ENCODE measurements at regions of chr17 and their contacts with region 1.

Region 1: DNA sequence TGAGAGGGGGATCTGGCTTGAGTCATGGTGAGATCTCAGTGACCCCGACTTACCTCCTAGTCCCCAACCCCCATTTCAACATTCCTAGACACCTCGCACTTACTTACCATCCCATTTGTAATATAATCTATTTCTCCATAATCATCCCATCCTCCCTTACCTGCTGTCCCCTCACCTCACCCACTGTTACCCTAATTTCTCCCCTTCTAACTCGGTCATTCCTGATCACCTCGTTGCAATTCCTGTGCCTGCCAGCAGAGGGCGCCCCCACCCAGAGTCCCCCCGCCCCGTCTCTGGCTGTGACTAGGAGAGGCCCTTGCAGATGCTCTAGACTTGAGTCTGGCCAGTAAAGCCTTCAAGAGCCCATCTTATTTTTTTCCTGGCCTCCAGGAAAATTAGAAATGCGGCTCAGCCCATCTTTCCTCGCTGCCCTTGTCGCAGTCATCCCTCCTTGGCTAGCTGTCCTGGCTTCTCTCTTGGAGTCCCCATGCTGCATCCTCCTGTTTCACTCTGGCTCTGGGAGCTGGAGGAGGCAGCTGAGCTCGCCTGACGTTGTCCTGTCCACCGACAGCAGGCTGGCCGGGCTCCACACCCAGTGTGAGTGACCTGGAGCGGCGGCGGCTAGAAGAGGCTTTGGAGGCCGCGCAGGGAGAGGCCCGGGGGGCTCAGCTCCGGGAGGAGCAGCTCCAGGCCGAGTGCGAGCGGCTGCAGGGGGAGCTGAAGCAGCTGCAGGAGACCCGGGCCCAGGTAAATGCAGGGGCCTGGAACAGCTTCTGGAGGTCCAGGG is 5.0 kb downstream of the TBKBP1 start:
- DNase-seq: peak; percentile 34 to 82 (median 63)
- ATAC-seq: peak; percentile 70
- H3K4me3 ChIP-seq: no peak overlapping the region
- H3K4me3 Mint-ChIP-seq: peak overlapping the region in 1 of 10 donors; percentile 29
- H3K27ac ChIP-seq: no peak overlapping the region
- H3K27ac Mint-ChIP-seq: peak overlapping the region in 2 of 9 donors; percentile 38 to 78
- H3K4me1 ChIP-seq: peaks cover 17 to 43% of the 10 kb centered on the region in 2 donors
- H3K4me1 Mint-ChIP-seq: peaks cover 19 to 54% (median 27%) of the 10 kb centered on the region in 7 donors
- H3K27me3 ChIP-seq: no peaks in the 10 kb centered on the region
- H3K27me3 Mint-ChIP-seq: peaks cover 0 to 3% (median 0%) of the 10 kb centered on the region in 5 donors

Region 2: DNA sequence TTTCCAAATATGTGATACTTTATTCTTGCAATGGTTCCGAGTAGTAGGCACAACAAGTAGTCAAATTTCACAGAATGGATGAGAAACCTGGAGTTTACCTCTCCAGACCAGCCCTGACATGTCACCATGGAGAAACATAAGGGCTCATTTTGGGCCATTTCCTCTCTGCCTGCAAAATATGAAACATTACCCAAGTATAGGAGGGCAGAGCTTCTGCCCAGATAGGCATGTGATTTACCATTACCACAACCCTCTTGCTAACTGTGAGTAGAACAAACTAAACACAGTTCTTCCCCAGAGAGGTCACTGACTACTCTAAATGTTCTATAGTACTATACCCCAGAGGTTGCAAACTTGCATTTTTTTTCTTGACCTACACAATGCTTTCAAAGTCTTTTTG is 64.9 kb before region 1 on chr17:
- CTCF ChIA-PET with region 1: no interaction called
- POLR2A ChIA-PET with region 1: no interaction called
- intact Hi-C with region 1: no loop called
- DNase-seq: no peak
- ATAC-seq: no peak
- H3K4me3 ChIP-seq: no peak overlapping the region
- H3K4me3 Mint-ChIP-seq: no peak overlapping the region
- H3K27ac ChIP-seq: no peak overlapping the region
- H3K27ac Mint-ChIP-seq: no peak overlapping the region
- H3K4me1 ChIP-seq: no peaks in the 10 kb centered on the region
- H3K4me1 Mint-ChIP-seq: peaks cover 6 to 16% (median 8%) of the 10 kb centered on the region in 7 donors
- H3K27me3 ChIP-seq: no peaks in the 10 kb centered on the region
- H3K27me3 Mint-ChIP-seq: no peaks in the 10 kb centered on the region

Region 3: DNA sequence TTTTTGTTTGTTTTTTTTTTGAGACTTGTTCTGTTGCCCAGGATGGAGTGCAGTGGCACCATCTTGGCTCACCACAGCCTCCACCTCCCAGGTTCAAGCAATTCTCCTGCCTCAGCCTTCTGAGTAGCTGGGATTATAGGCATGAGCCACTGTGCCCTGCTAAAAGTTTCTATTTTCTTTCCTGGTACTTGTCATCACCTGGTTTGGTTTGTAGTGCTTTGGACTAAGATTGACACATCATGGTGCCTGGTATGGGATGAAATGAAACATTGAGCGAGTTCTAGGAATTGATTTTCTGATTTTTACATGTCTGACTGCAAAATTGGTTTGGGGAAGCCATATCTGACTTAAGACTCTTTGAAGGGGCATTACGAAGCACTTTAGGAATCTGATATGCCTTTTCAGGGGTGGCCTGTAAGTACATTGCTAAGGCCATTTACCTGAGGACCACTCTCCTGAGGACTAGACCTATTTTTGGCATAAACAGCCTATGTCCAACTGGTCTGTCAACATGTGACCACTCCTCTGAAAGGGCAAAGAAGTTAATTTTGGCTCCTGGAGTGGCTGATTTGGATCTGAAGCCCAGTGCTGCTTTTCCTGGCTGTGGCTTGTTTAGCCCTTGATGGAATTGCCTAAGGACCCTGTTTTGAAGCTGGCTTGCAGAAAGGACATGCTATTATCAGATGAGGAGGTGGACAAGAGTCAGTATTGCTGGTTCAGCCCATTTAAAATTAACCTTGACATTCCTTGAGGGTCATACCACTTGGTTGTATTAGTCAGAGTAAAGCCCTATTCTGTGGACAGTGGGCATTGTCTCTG is 23.4 kb before region 1 on chr17:
- CTCF ChIA-PET with region 1: interaction called, 11 read pairs
- POLR2A ChIA-PET with region 1: no interaction called
- intact Hi-C with region 1: no loop called
- DNase-seq: peak in 1 of 9 donors; percentile 9
- ATAC-seq: no peak
- H3K4me3 ChIP-seq: no peak overlapping the region
- H3K4me3 Mint-ChIP-seq: no peak overlapping the region
- H3K27ac ChIP-seq: no peak overlapping the region
- H3K27ac Mint-ChIP-seq: peak overlapping the region in 3 of 9 donors; percentile 20 to 54 (median 38)
- H3K4me1 ChIP-seq: no peaks in the 10 kb centered on the region
- H3K4me1 Mint-ChIP-seq: peaks cover 0 to 40% (median 9%) of the 10 kb centered on the region in 7 donors
- H3K27me3 ChIP-seq: no peaks in the 10 kb centered on the region
- H3K27me3 Mint-ChIP-seq: no peaks in the 10 kb centered on the region

Region 4: GRCh38 chr17:47733047-47733673 is 34.2 kb after region 1 on chr17 and contains the start of gene TBX21:
- CTCF ChIA-PET with region 1: interaction called, 6 read pairs
- POLR2A ChIA-PET with region 1: interaction called, 5 read pairs
- intact Hi-C with region 1: loop called (anchors 1 kb)
- DNase-seq: peak; percentile 57 to 87 (median 76)
- ATAC-seq: peak; percentile 95
- H3K4me3 ChIP-seq: peak within 1 kb of the TSS; percentile 75
- H3K4me3 Mint-ChIP-seq: peak within 1 kb of the TSS; percentile 78 to 96 (median 87)
- H3K27ac ChIP-seq: no peak within 1 kb of the TSS
- H3K27ac Mint-ChIP-seq: peak within 1 kb of the TSS; percentile 10 to 94 (median 51)
- H3K4me1 ChIP-seq: peaks cover 17 to 43% of the 10 kb centered on the region in 2 donors
- H3K4me1 Mint-ChIP-seq: peaks cover 11 to 75% (median 25%) of the 10 kb centered on the region in 7 donors
- H3K27me3 ChIP-seq: no peaks in the 10 kb centered on the region
- H3K27me3 Mint-ChIP-seq: peaks cover 0 to 14% (median 5%) of the 10 kb centered on the region in 5 donors
- total RNA-seq, gene TBX21: 1.3 to 38.6 (median 4.5) TPM

Region 5: GRCh38 chr17:47789611-47790561 is 90.9 kb after region 1 on chr17:
- CTCF ChIA-PET with region 1: no interaction called
- POLR2A ChIA-PET with region 1: no interaction called
- intact Hi-C with region 1: loop called in 1 of 2 experiments (anchors 1 kb)
- DNase-seq: peak in 7 of 9 donors; percentile 12 to 64 (median 26)
- ATAC-seq: peak; percentile 80
- H3K4me3 ChIP-seq: peak overlapping the region; percentile 42
- H3K4me3 Mint-ChIP-seq: peak overlapping the region; percentile 38 to 77 (median 69)
- H3K27ac ChIP-seq: no peak overlapping the region
- H3K27ac Mint-ChIP-seq: peak overlapping the region in 1 of 9 donors; percentile 72
- H3K4me1 ChIP-seq: no peaks in the 10 kb centered on the region
- H3K4me1 Mint-ChIP-seq: peaks cover 8 to 21% (median 12%) of the 10 kb centered on the region in 7 donors
- H3K27me3 ChIP-seq: peaks cover 0 to 4% of the 10 kb centered on the region in 2 donors
- H3K27me3 Mint-ChIP-seq: peaks cover 63 to 86% (median 73%) of the 10 kb centered on the region in 5 donors

Region 6: GRCh38 chr17:47831003-47831933 is 132.3 kb after region 1 on chr17 and contains the starts of genes LRRC46 and MRPL10:
- CTCF ChIA-PET with region 1: no interaction called
- POLR2A ChIA-PET with region 1: no interaction called
- intact Hi-C with region 1: no loop called
- DNase-seq: peak; percentile 79 to 96 (median 91)
- ATAC-seq: peak; percentile 88
- H3K4me3 ChIP-seq: peak within 1 kb of the TSS; percentile 99
- H3K4me3 Mint-ChIP-seq: peak within 1 kb of the TSS; percentile 89 to 98 (median 92)
- H3K27ac ChIP-seq: peak within 1 kb of the TSS; percentile 77
- H3K27ac Mint-ChIP-seq: peak within 1 kb of the TSS; percentile 76 to 96 (median 92)
- H3K4me1 ChIP-seq: peaks cover 31 to 38% of the 10 kb centered on the region in 2 donors
- H3K4me1 Mint-ChIP-seq: peaks cover 34 to 79% (median 70%) of the 10 kb centered on the region in 7 donors
- H3K27me3 ChIP-seq: no peaks in the 10 kb centered on the region
- H3K27me3 Mint-ChIP-seq: no peaks in the 10 kb centered on the region
- total RNA-seq, gene LRRC46: 0.20 to 1.7 (median 0.66) TPM
- total RNA-seq, gene MRPL10: 33.6 to 51.2 (median 35.7) TPM

Region 7: DNA sequence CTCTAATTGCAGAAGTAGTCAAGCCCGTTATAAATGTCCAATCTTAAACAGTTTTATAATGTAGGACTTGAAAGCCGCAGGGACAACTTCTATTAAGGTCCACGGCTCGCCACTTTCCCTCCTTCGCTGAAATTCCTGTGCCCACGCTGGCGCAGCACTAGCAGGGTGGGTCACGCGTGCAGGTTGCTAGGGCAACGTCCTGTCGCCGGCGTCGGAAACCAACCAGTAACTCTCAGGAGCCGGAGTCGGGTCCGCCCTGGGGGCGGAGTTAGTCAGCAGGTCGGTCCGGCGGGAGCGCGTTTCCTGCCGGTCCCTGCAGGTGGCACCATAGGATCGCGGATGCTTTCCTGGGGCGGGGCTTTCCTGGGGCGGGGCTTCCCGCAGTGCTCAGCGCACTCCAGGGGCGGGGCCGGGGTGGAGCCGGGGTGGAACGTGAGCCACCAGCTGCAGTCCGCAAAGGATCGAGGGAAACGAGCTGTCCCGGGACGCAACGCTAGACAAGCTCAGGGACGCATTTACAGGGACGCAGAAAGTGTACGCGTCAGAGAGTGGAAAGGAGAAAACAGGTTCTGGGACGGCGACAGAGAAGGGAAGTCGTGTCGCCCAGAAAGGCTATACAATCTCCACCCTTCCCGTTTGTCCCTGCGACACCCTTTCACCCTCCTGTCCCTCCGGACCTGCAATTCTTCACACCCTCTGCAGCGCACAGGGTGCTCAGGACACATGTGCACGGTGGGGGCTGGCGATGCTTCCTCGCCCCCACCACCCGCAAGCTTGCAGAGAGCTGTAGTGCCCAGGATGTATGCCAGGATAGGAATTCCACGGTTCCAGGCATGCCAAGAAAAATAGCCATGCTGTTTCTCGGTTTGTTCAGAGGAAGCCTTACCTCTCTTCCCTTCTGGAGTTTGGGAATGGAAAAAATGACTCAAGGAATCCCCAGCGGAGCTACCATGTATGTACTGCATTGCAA is 326.3 kb after region 1 on chr17:
- CTCF ChIA-PET with region 1: no interaction called
- POLR2A ChIA-PET with region 1: no interaction called
- intact Hi-C with region 1: no loop called
- DNase-seq: peak; percentile 91 to 97 (median 95)
- ATAC-seq: peak; percentile 98
- H3K4me3 ChIP-seq: peak overlapping the region; percentile 43
- H3K4me3 Mint-ChIP-seq: peak overlapping the region; percentile 83 to 92 (median 88)
- H3K27ac ChIP-seq: no peak overlapping the region
- H3K27ac Mint-ChIP-seq: peak overlapping the region in 8 of 9 donors; percentile 13 to 91 (median 73)
- H3K4me1 ChIP-seq: peaks cover 9 to 26% of the 10 kb centered on the region in 2 donors
- H3K4me1 Mint-ChIP-seq: peaks cover 23 to 46% (median 34%) of the 10 kb centered on the region in 7 donors
- H3K27me3 ChIP-seq: peaks cover 0 to 11% of the 10 kb centered on the region in 2 donors
- H3K27me3 Mint-ChIP-seq: peaks cover 28 to 50% (median 40%) of the 10 kb centered on the region in 5 donors

Region 8: DNA sequence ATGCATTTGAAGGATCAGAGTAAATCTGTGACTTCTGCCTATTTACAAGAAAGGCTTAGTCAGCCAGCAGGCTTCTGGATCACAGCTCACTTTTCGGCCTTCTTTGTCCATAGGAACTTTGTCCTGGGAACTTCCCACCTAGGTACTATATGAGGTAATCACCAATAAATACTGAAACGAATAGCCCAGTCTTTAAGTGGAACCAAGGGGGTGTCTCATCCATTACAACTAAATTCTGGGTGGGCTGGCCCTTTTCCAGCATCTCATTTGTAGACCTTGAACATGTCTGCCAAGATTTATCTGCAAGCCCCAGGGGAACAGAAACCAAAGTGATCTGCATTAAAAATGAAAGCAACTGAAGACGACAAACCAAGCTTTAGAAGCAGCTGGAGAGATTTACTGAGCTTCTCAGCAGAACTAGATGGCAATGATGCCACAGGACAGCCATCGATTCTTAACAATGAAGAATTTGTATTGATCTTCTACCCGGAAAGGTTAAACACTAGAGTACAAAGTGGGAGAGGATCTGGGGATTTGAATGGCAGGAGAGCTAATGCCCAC is 464.1 kb after region 1 on chr17:
- CTCF ChIA-PET with region 1: no interaction called
- POLR2A ChIA-PET with region 1: no interaction called
- intact Hi-C with region 1: no loop called
- DNase-seq: no peak
- ATAC-seq: no peak
- H3K4me3 ChIP-seq: no peak overlapping the region
- H3K4me3 Mint-ChIP-seq: no peak overlapping the region
- H3K27ac ChIP-seq: no peak overlapping the region
- H3K27ac Mint-ChIP-seq: peak overlapping the region in 8 of 9 donors; percentile 9 to 63 (median 32)
- H3K4me1 ChIP-seq: no peaks in the 10 kb centered on the region
- H3K4me1 Mint-ChIP-seq: peaks cover 0 to 29% (median 5%) of the 10 kb centered on the region in 7 donors
- H3K27me3 ChIP-seq: no peaks in the 10 kb centered on the region
- H3K27me3 Mint-ChIP-seq: no peaks in the 10 kb centered on the region

Measured in naive thymus-derived CD4-positive, alpha-beta T cell (primary cell).